Activated B cell treated with CpG ODN at 0.5 μM for 24 hours (primary cell): ENCODE measurements at regions of chr2 and their contacts with region 1.

Region 1: GRCh38 chr2:241355983-241356870 is at the start of gene FARP2:
- DNase-seq: peak; percentile 94
- ATAC-seq: peak; percentile 89
- H3K4me3 Mint-ChIP-seq: peak within 1 kb of the TSS; percentile 87
- H3K27ac Mint-ChIP-seq: peak within 1 kb of the TSS; percentile 88
- H3K4me1 Mint-ChIP-seq: peaks cover 49% of the 10 kb centered on the region
- H3K27me3 Mint-ChIP-seq: no peaks in the 10 kb centered on the region
- CTCF ChIP-seq: no peak
- total RNA-seq, gene FARP2: 74.7 and 91.2 TPM in 2 replicates

Region 2: DNA sequence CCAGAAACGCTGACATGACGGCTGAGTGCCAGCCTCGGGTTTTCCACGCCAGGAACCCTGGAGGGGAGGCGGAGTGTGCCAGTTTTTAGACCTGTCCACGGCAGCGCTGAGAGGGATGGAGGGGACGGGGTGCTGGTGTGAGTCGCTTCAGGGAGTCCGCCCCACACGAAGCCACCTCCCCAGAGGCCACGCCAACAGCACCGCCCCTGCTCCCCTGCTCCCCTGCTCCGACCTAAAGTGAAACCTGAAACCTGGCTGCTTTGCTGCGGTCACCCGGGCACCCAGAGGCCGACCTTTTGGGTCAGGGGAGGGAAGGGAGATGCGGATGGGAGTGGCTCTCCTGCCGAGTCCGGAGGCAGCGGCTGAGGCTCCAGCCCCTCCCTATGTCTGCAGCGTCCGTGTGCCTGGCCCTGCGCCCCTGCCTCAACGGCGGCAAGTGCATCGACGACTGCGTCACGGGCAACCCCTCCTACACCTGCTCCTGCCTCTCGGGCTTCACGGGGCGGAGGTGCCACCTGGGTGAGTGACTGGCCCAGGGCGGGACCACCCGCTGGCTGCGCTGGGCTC is 319.7 kb before region 1 on chr2:
- CTCF ChIA-PET with region 1: no interaction called
- POLR2A ChIA-PET with region 1: no interaction called
- intact Hi-C with region 1: loop called (anchors 5 kb)
- DNase-seq: peak; percentile 63
- ATAC-seq: peak; percentile 74
- H3K4me3 Mint-ChIP-seq: peak overlapping the region; percentile 84
- H3K27ac Mint-ChIP-seq: peak overlapping the region; percentile 76
- H3K4me1 Mint-ChIP-seq: peaks cover 52% of the 10 kb centered on the region
- H3K27me3 Mint-ChIP-seq: no peaks in the 10 kb centered on the region
- CTCF ChIP-seq: no peak

Region 3: GRCh38 chr2:241339839-241340630 is 16.2 kb before region 1 on chr2:
- CTCF ChIA-PET with region 1: no interaction called
- POLR2A ChIA-PET with region 1: no interaction called
- intact Hi-C with region 1: loop called (anchors 2 kb)
- DNase-seq: no peak
- ATAC-seq: no peak
- H3K4me3 Mint-ChIP-seq: no peak overlapping the region
- H3K27ac Mint-ChIP-seq: no peak overlapping the region
- H3K4me1 Mint-ChIP-seq: peaks cover 21% of the 10 kb centered on the region
- H3K27me3 Mint-ChIP-seq: no peaks in the 10 kb centered on the region
- CTCF ChIP-seq: no peak

Region 4: GRCh38 chr2:241379481-241380480 is 23.6 kb after region 1 on chr2:
- CTCF ChIA-PET with region 1: interaction called, 9 read pairs
- POLR2A ChIA-PET with region 1: interaction called, 33 read pairs
- intact Hi-C with region 1: loop called (anchors 1 kb)
- DNase-seq: no peak
- ATAC-seq: no peak
- H3K4me3 Mint-ChIP-seq: no peak overlapping the region
- H3K27ac Mint-ChIP-seq: no peak overlapping the region
- H3K4me1 Mint-ChIP-seq: peaks cover 23% of the 10 kb centered on the region
- H3K27me3 Mint-ChIP-seq: no peaks in the 10 kb centered on the region
- CTCF ChIP-seq: no peak

Region 5: DNA sequence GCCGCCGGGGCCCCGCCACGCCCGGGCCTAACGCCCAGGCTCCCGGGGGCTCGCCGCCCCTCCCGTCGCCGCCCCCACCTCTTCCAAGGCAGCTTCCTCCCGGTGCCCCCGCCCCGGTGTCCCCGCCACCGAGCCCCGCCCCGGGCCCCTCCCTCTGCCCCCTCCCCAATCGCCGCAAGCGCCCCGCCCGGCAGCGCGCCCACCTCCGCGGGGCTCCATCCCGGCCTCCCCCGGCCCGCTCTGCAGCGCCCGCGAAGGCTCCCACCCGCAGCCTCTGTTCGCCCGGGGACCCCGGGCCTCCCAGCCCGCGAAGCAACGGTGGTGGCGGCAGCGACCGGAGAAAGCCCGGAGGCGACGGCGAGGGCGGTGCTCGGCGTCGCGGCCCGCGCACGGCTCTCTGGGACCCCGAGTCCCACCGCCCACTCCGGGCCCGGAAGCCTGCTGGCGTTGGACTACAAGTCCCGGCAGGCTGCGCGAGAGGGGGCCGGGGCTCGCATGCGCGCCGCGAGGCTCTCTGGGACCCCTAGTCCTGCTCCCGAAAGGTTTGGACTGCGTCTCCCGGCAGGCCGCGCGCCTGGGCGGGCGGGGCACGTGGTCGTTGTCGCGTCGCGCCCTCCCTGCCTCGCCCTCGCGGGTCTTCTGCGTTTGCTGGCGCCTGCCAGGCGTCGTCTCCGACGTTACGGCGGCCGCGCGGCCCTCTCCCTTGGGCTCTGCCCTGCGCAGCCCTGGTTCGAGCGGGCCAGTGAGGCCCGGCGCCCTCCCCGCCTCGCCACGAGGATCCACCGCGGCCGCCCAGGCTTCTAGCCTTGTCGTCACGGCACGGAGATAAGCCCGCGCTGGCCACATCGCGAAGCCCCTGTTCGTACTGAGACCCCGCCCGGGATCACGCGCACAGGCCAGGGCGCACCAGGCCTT is 152.3 kb after region 1 on chr2 and contains the start of gene STK25:
- CTCF ChIA-PET with region 1: no interaction called
- POLR2A ChIA-PET with region 1: interaction called, 3 read pairs
- intact Hi-C with region 1: loop called (anchors 1 kb)
- DNase-seq: peak; percentile 98
- ATAC-seq: peak; percentile 93
- H3K4me3 Mint-ChIP-seq: peak within 1 kb of the TSS; percentile 84
- H3K27ac Mint-ChIP-seq: peak within 1 kb of the TSS; percentile 68
- H3K4me1 Mint-ChIP-seq: peaks cover 23% of the 10 kb centered on the region
- H3K27me3 Mint-ChIP-seq: no peaks in the 10 kb centered on the region
- CTCF ChIP-seq: no peak
- total RNA-seq, gene STK25: 123 and 151 TPM in 2 replicates

Region 6: DNA sequence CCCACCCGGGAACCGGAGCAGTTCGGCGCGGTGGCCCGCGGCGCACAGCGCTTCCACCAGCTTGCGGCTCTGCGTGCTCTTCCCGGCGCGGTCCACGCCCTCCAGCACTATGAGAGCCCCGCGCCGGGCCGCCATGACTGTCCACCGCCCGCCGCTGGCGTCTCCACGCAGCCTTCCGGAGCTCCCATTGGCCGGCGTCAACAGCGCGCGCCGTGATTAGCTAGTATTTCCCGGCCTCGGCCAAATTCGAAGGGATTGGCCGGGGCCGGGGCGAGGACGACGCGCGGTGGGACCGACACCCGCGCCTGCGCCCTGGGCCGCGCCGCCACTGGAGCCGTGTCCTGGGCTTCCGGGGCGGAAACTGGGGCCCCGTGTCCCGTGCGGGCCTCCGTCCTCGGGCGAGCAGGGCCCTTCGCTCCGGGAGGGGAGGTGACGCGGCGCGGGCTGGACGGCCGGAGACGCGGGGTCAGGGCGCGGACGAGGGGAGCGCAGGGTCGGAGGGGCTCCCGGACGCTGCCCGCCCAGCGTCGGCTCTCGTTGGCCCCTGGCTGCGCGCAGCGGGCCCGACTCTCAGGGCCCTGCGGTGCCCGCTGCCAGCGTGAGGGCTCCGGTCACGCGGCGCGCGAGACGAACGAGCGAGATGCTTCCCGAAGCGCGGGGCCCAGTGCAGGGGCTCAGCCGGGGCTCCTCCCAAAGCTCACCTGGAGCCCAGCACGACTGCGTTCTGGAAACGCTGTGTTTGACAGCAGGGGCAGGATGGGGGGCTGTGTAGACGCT is 330.6 kb after region 1 on chr2 and contains the start of gene DTYMK:
- CTCF ChIA-PET with region 1: no interaction called
- POLR2A ChIA-PET with region 1: no interaction called
- intact Hi-C with region 1: loop called (anchors 5 kb)
- DNase-seq: peak; percentile 99
- ATAC-seq: peak; percentile 95
- H3K4me3 Mint-ChIP-seq: peak within 1 kb of the TSS; percentile 80
- H3K27ac Mint-ChIP-seq: peak within 1 kb of the TSS; percentile 87
- H3K4me1 Mint-ChIP-seq: peaks cover 28% of the 10 kb centered on the region
- H3K27me3 Mint-ChIP-seq: no peaks in the 10 kb centered on the region
- CTCF ChIP-seq: no peak
- total RNA-seq, gene DTYMK: 29.2 and 34.7 TPM in 2 replicates